Sciatic nerve (tissue), 2 donors: ENCODE measurements at regions of chr3 and their contacts with region 1.

Region 1: DNA sequence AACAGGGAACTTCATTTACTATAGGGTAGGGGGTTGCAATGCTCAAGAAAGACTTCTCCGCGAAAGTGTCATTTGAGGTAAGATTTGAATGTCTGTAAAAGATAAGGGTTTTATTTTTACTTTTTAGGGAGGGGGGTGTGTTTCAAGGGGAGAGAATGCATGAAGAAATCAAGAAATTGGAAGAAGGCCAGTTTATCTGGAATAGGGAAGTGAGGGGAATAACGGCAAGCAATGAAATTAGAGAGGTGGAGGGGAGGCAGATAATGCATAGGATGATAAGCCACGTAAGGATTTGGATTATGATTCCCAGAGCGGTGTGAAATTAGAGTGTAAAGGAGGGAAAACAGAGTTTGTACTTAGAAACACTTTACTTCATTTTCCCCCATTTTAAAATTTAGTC is 63.0 kb upstream of the MB21D2 start:
- DNase-seq: no peak
- ATAC-seq: no peak

Region 2: DNA sequence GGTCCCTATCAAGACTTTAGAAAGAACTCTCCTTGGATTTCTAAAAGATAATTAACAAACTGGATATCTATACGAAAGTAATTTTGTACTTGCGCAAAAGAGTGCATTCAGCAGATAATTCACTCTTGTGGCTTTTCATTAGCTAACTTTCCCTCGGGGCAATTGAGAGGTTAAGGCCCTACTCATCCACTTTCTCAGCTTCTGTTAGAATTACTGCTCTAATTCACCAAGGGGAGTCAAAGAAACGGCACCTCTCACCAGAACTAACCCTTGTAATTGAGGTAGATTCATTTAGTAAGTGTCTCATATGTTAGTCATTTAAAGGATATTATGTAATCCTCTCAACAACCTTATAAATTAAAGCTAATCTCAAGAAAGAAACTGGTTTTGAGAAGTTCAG is 40.5 kb before region 1 on chr3:
- intact Hi-C with region 1: loop called (anchors 2 kb)
- DNase-seq: no peak
- ATAC-seq: no peak